ENCODE measurements at regions of chr4 and their contacts with region 1.

Region 1: GRCh38 chr4:158722917-158723793 is at the start of gene PPID:
- DNase-seq: peak; percentile 52 to 91 (median 77)
- ATAC-seq: peak; percentile 84
- H3K4me3 ChIP-seq: peak within 1 kb of the TSS; percentile 83 to 94
- H3K4me3 Mint-ChIP-seq: peak within 1 kb of the TSS; percentile 97
- H3K27ac ChIP-seq: peak within 1 kb of the TSS; percentile 88 to 94
- H3K27ac Mint-ChIP-seq: peak within 1 kb of the TSS; percentile 97
- H3K4me1 ChIP-seq: peaks cover 19% of the 10 kb centered on the region
- H3K4me1 Mint-ChIP-seq: peaks cover 36% of the 10 kb centered on the region
- H3K27me3 ChIP-seq: no peaks in the 10 kb centered on the region
- H3K27me3 Mint-ChIP-seq: peaks cover 11% of the 10 kb centered on the region
- CTCF ChIP-seq: no peak
- total RNA-seq, gene PPID: 10.3 to 10.5 TPM

Region 2: DNA sequence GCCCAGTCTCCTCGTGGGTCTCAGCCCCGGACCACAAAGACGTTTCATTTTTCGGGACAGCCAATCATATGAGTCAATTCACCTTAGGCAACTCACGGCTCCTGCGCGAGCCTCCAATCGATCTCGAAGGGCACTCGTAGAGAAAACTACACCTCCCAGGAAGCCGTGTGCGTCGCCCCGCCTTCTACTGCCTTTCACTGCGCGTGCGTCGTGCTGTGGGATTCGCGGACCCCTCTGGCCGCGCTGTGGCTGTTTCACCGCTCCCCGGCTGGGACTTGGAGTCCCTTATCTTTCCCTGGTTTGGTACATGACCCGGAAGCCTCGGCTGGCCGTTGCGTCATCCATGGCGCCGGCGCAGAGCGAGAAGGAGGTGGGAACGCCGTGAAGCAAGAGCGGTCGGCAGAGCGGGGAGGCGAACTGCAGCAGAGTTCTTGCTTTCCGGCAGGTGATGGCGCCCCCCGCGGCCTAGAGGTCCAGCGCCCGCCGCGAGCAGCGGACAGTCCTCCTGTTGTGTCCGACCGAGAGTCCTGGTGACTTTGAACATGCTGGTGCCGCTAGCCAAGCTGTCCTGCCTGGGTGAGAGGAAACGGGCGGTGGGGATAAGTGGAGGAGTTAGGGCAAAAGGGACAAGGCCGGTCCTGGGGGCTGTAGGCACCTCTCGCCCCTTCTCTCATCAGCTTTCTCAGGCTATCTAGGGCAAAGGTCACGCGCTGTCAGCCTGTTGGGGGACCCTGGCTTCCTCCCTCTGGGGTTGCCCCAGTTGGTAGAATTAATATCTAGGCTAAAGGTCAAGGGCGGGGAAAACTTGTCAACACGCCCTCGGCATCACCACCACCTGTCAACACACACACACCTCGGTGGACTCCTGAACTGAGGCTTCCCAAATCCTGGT is 51.0 kb before region 1 on chr4 and contains the start of gene ETFDH:
- CTCF ChIA-PET with region 1: no interaction called
- POLR2A ChIA-PET with region 1: no interaction called
- intact Hi-C with region 1: loop called (anchors 1 kb)
- DNase-seq: peak; percentile 97 to 100 (median 98)
- ATAC-seq: peak; percentile 80
- H3K4me3 ChIP-seq: peak within 1 kb of the TSS; percentile 71 to 96
- H3K4me3 Mint-ChIP-seq: peak within 1 kb of the TSS; percentile 97
- H3K27ac ChIP-seq: peak within 1 kb of the TSS; percentile 84 to 97
- H3K27ac Mint-ChIP-seq: peak within 1 kb of the TSS; percentile 96
- H3K4me1 ChIP-seq: peaks cover 14% of the 10 kb centered on the region
- H3K4me1 Mint-ChIP-seq: peaks cover 29% of the 10 kb centered on the region
- H3K27me3 ChIP-seq: no peaks in the 10 kb centered on the region
- H3K27me3 Mint-ChIP-seq: no peaks in the 10 kb centered on the region
- CTCF ChIP-seq: peak; percentile 37
- total RNA-seq, gene ETFDH: 13.4 to 16.7 TPM

Region 3: DNA sequence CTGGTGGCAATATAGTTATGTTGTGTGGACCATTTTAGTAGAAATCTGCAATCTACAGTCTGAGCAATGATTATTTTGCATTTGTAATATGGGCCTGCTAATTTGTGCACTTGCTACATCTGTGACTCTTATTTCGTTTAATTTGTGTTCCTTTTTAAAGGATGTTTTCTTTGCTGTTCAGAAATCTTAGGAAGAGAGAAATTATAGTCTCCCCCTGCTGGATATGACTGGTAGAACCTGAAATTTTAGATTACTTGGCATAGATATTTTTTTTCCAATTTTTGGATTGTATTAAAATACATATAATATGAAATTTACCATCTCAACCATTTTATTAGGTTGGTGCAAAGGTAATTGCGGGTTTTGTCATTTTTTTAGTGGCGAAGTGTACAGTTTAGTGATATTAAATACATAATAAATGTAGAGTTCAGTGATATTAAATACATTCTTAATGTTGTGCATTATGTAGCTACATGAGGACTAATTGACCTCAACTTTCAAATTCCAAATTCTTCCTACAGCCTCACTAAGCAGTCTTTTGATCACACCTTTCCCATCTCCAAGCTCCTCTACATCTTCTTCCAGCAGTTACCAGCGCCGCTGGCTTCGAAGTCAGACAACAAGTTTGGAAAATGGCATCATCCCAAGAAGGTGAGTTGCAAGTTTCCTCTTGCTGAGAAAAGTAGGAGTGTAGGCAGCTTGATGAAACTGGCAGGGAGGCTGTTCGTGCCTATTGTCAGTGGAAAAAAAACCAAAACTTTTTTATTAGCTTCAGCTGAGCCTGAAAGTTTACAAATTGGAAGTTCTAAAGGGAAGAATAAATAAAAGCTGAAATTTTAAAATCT is 127.9 kb after region 1 on chr4:
- CTCF ChIA-PET with region 1: interaction called, 12 read pairs
- POLR2A ChIA-PET with region 1: no interaction called
- intact Hi-C with region 1: no loop called
- DNase-seq: peak in 2 of 9 experiments; percentile 38 to 55
- ATAC-seq: peak; percentile 38
- H3K4me3 ChIP-seq: no peak overlapping the region
- H3K4me3 Mint-ChIP-seq: no peak overlapping the region
- H3K27ac ChIP-seq: no peak overlapping the region
- H3K27ac Mint-ChIP-seq: no peak overlapping the region
- H3K4me1 ChIP-seq: no peaks in the 10 kb centered on the region
- H3K4me1 Mint-ChIP-seq: peaks cover 5% of the 10 kb centered on the region
- H3K27me3 ChIP-seq: no peaks in the 10 kb centered on the region
- H3K27me3 Mint-ChIP-seq: no peaks in the 10 kb centered on the region
- CTCF ChIP-seq: peak; percentile 74

Region 4: GRCh38 chr4:159102622-159103383 is 379.6 kb after region 1 on chr4 and contains the start of gene RAPGEF2:
- CTCF ChIA-PET with region 1: no interaction called
- POLR2A ChIA-PET with region 1: no interaction called
- intact Hi-C with region 1: loop called (anchors 1 to 5 kb)
- DNase-seq: peak; percentile 71 to 94 (median 87)
- ATAC-seq: peak; percentile 89
- H3K4me3 ChIP-seq: peak within 1 kb of the TSS; percentile 62 to 94
- H3K4me3 Mint-ChIP-seq: peak within 1 kb of the TSS; percentile 88
- H3K27ac ChIP-seq: peak within 1 kb of the TSS; percentile 70 to 83
- H3K27ac Mint-ChIP-seq: peak within 1 kb of the TSS; percentile 87
- H3K4me1 ChIP-seq: peaks cover 14% of the 10 kb centered on the region
- H3K4me1 Mint-ChIP-seq: peaks cover 36% of the 10 kb centered on the region
- H3K27me3 ChIP-seq: peaks cover 0 to 4% of the 10 kb centered on the region in 2 experiments
- H3K27me3 Mint-ChIP-seq: peaks cover 14% of the 10 kb centered on the region
- CTCF ChIP-seq: no peak
- total RNA-seq, gene RAPGEF2: 24.1 to 25.8 TPM